ENCODE measurements at regions of chr18 and their contacts with region 1.

Region 1: GRCh38 chr18:49250816-49251388 is 209.5 kb downstream of the DYM start:
- DNase-seq: no peak
- ATAC-seq: peak; percentile 80
- H3K4me3 ChIP-seq: no peak overlapping the region
- H3K27ac ChIP-seq: no peak overlapping the region
- H3K4me1 ChIP-seq: no peaks in the 10 kb centered on the region
- H3K27me3 ChIP-seq: no peaks in the 10 kb centered on the region
- CTCF ChIP-seq: peak; percentile 55 to 65 (median 58); a peak in 5 of 6 replicates
- POLR2A ChIP-seq: no peak
- RAD21 ChIP-seq: peak; percentile 77

Region 2: GRCh38 chr18:49412679-49413078 is 161.8 kb after region 1 on chr18:
- CTCF ChIA-PET with region 1: no interaction called
- POLR2A ChIA-PET with region 1: no interaction called
- RAD21 ChIA-PET with region 1: interaction called in 1 of 2 experiments, 6 read pairs
- intact Hi-C with region 1: loop called (anchors 1 kb)
- DNase-seq: no peak
- ATAC-seq: no peak
- H3K4me3 ChIP-seq: no peak overlapping the region
- H3K27ac ChIP-seq: no peak overlapping the region
- H3K4me1 ChIP-seq: peaks cover 0 to 4% of the 10 kb centered on the region in 2 experiments; a peak in 2 of 4 replicates
- H3K27me3 ChIP-seq: no peaks in the 10 kb centered on the region
- CTCF ChIP-seq: no peak
- POLR2A ChIP-seq: no peak
- RAD21 ChIP-seq: no peak

Region 3: DNA sequence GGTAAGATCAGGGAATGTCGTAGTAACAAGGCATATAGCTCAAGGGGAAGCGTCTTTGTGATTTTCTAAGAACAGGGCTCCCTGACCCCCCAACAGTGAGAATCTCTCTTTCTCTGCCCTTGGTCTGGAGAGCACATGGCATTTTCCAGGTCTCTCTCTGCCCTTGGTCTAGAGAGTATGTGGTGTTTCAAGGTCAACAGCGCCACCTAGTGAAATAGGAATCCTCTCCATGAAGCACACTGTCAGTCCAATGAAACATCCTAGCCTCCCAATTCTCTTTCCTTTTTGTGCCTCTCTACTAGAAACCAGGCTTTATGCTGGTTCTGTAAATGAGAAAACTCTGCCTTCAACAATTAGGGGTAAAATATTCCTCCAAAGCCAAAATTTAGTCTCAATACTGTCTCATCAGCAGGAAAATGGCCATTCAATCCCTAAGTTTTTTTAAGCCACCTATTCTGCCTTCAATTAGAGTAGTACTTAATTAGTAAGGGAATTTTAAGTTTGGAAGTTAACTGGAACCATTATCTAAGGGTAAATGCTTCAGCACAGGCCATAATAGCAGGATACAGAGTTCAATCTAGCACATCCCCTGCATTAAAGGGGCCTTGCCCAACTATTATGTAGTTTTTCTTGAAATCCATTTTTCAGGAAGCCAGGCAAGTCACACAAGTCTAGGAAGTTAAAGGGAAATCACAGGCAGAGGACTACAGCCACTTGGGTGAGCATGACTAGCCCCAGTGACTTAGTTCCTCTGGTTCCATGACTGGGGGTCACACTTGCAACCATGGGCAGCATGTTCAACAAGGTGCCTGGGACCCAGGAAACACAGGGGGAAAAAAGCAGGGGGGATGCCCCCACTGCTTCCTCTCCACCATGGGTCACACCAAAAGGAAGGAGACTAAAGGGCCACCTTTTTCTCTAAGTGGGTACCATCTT is 197.2 kb after region 1 on chr18:
- CTCF ChIA-PET with region 1: no interaction called
- POLR2A ChIA-PET with region 1: no interaction called
- RAD21 ChIA-PET with region 1: no interaction called
- intact Hi-C with region 1: loop called (anchors 2 kb)
- DNase-seq: peak; percentile 67
- ATAC-seq: peak; percentile 97
- H3K4me3 ChIP-seq: no peak overlapping the region
- H3K27ac ChIP-seq: no peak overlapping the region
- H3K4me1 ChIP-seq: no peaks in the 10 kb centered on the region
- H3K27me3 ChIP-seq: no peaks in the 10 kb centered on the region
- CTCF ChIP-seq: peak; percentile 49 to 80 (median 64); a peak in 5 of 6 replicates
- POLR2A ChIP-seq: no peak
- RAD21 ChIP-seq: peak; percentile 66